Tibial artery (tissue), 4 donors: ENCODE measurements at regions of chr15 and their contacts with region 1.

Region 1: DNA sequence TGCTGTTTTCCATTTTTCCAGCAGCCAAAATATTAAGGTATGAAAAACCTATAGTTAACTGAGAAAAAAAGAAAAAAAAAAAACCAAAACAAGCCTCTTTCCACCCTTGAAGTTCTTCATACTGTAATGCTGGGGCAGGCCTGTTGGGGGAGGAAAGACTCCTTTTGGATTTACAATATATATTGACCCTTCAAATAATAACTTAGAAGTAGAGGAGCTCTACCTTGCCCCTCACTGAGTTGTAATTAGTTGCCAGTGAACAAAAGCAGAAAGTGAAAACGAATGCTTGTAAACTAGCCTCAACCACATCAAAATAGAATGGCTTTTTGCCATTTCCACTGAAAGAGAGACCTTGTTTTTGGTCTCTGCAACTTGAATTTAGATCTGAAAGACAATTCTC is 326.6 kb downstream of the NR2F2 start:
- DNase-seq: no peak
- H3K4me3 ChIP-seq: no peak overlapping the region
- H3K27ac ChIP-seq: no peak overlapping the region
- H3K4me1 ChIP-seq: no peaks in the 10 kb centered on the region
- H3K27me3 ChIP-seq: no peaks in the 10 kb centered on the region
- CTCF ChIP-seq: no peak

Region 2: DNA sequence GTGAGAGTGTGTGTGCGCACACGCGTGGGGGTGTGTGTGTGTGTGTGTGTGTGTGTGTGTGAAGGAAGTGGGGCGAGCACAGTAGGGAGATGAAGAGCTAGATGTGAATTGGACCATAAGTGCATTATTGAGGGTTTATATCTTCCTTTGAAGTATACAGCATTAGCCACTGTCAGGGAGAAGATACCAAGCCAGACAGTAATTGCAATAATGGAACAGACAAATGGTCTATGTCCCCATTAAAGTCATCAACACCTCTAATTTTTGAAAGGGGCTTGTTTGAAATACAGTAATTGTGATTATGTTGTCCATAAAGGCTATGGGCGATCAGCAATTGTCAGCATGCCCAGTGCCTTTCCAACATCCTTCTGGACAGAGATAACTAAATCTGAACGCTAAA is 755.8 kb before region 1 on chr15:
- intact Hi-C with region 1: no loop called
- DNase-seq: no peak
- H3K4me3 ChIP-seq: no peak overlapping the region
- H3K27ac ChIP-seq: no peak overlapping the region
- H3K4me1 ChIP-seq: no peaks in the 10 kb centered on the region
- H3K27me3 ChIP-seq: no peaks in the 10 kb centered on the region
- CTCF ChIP-seq: no peak

Region 3: GRCh38 chr15:96583688-96584087 is 73.4 kb before region 1 on chr15:
- intact Hi-C with region 1: no loop called
- DNase-seq: no peak
- H3K4me3 ChIP-seq: no peak overlapping the region
- H3K27ac ChIP-seq: no peak overlapping the region
- H3K4me1 ChIP-seq: peaks cover 0 to 6% (median 0%) of the 10 kb centered on the region in 4 donors
- H3K27me3 ChIP-seq: no peaks in the 10 kb centered on the region
- CTCF ChIP-seq: no peak

Region 4: DNA sequence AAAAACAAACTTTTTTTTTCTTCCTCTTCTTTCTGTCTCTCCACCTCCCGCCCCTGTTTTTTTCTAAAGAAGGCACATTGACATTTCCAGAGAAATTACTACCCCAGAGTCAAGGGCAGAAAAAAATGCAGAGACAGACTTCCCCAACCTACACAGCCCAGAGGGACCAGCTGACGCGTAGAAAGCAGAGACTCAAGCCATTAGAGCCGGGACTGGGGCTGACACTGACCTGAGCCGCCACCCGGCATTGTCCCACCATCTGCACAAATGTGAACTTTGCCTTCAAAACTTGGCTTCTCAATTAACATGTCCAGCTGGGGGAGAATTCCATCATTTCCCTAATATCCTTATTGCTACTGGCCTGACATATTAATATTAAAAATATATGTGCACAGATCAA is 59.0 kb after region 1 on chr15:
- intact Hi-C with region 1: loop called (anchors 10 kb)
- DNase-seq: no peak
- H3K4me3 ChIP-seq: no peak overlapping the region
- H3K27ac ChIP-seq: no peak overlapping the region
- H3K4me1 ChIP-seq: no peaks in the 10 kb centered on the region
- H3K27me3 ChIP-seq: no peaks in the 10 kb centered on the region
- CTCF ChIP-seq: no peak

Region 5: GRCh38 chr15:96750361-96750760 is 93.3 kb after region 1 on chr15:
- intact Hi-C with region 1: no loop called
- DNase-seq: no peak
- H3K4me3 ChIP-seq: no peak overlapping the region
- H3K27ac ChIP-seq: no peak overlapping the region
- H3K4me1 ChIP-seq: no peaks in the 10 kb centered on the region
- H3K27me3 ChIP-seq: no peaks in the 10 kb centered on the region
- CTCF ChIP-seq: no peak